ENCODE measurements at regions of chr2 and their contacts with region 1.

Region 1: DNA sequence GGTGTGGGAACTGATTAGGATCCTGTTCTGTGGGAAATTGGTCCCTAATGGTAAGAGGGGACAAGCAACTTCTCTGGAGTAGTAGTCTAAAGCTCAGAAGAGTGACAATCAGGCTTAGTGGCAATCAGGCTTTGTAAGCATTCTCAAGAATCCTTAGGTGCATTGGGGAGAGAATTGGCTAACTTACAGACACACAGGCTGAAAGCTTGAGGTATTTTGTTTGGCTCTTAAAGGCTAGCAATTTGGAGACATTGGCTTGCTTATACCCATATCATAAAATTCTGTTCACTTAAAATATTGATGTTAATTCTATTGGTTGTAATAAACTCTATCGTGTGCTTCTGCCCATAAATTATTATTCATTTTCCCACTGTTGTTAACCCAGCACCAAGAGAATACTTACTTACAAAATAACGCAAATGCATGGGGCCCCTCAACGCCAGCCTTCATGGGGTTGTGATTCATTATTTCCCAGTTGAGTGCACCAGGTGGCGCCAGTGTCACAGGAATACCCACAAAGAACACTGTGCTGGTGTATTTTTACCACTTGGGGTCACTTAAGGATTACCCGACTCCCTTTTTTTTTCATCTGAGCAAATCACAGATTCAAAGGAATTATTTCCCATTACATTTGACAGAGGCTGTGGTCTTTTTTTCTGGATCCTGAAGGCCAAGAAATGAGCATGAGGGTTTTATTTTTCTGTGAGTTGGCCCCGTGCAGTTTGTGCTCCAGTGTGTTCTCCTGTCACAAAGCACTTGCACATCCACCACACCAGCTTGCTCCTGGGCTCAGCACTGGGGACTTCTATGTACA is 45.5 kb downstream of the DDX1 start:
- DNase-seq: no peak
- ATAC-seq: peak; percentile 88

Region 2: GRCh38 chr2:15912205-15912604 is 275.0 kb after region 1 on chr2:
- intact Hi-C with region 1: loop called (anchors 5 kb)
- DNase-seq: no peak
- ATAC-seq: peak; percentile 72

Region 3: DNA sequence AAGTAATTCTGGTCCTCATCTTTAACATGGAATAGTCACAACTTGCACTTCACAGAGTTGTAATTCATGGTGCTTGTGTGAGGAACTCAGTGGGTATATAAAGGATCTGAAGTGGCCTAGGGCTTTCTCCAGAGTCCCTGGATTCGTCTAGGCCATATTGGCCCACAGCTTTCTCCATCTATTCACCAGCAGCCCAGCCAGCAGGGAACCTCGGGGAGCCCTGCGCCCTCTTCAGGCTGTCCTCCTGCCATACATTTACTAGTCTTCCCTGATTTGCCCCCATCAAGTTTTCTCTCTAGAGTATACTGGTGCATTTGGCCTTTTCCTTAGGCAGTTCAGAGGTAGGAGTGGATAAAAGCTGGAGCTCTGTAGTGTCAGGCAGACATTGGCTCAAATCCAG is 581.4 kb after region 1 on chr2:
- intact Hi-C with region 1: loop called (anchors 5 kb)
- DNase-seq: no peak
- ATAC-seq: no peak

Region 4: GRCh38 chr2:16487686-16488085 is 850.5 kb after region 1 on chr2:
- intact Hi-C with region 1: loop called (anchors 5 kb)
- DNase-seq: no peak
- ATAC-seq: no peak

Region 5: GRCh38 chr2:16608661-16609643 is 971.8 kb after region 1 on chr2:
- intact Hi-C with region 1: loop called (anchors 2 kb)
- DNase-seq: peak; percentile 92
- ATAC-seq: peak; percentile 87